Activated CD4-positive, alpha-beta memory T cell treated with anti-CD3 and anti-CD28 coated beads for 36 hours (primary cell): ENCODE measurements at regions of chr1 and their contacts with region 1.

Region 1: DNA sequence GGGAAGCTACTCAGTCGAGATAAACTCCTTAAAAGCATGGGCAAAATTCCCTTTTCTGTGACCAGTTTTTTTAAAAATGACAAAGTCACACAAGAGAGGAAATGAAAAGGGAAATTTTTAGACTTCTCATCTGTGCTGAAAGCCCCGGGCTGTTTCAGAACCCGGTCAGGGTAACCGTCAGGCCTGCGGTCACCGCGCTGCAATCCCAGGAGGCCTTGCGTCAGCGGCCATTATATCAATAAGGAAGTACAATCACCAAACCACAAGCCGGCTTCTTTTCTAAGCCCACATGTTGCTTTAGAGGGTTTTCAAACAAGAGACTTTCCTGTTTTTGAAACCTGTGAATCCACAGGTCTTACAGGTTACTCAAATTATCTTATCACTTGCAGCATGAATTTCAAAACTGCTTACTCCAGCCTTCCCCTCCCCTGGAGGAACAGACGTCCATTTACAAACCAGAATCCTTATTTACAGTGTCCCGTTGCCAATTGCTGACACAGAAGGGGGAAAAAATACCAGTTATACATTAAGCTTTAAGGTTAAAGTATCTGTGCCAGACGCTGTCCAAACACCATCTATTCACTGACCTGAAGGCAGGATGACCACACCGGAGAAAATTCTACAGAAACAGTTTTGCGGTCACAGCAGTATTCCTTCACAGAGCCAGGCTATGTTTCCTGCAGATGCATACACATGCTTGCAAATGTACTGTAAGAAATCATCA is 165.3 kb downstream of the TOMM20 start:
- DNase-seq: peak; percentile 97
- H3K4me3 Mint-ChIP-seq: peak overlapping the region; percentile 63
- H3K27ac Mint-ChIP-seq: peak overlapping the region; percentile 98
- H3K4me1 Mint-ChIP-seq: peaks cover 67% of the 10 kb centered on the region
- H3K27me3 Mint-ChIP-seq: no peaks in the 10 kb centered on the region

Region 2: GRCh38 chr1:234722904-234723720 is 240.2 kb before region 1 on chr1:
- CTCF ChIA-PET with region 1: no interaction called
- POLR2A ChIA-PET with region 1: interaction called, 5 read pairs
- intact Hi-C with region 1: loop called (anchors 1 kb)
- DNase-seq: peak; percentile 91
- H3K4me3 Mint-ChIP-seq: peak overlapping the region; percentile 60
- H3K27ac Mint-ChIP-seq: peak overlapping the region; percentile 96
- H3K4me1 Mint-ChIP-seq: peaks cover 66% of the 10 kb centered on the region
- H3K27me3 Mint-ChIP-seq: no peaks in the 10 kb centered on the region

Region 3: GRCh38 chr1:234772345-234773147 is 190.8 kb before region 1 on chr1:
- CTCF ChIA-PET with region 1: interaction called, 3 read pairs
- POLR2A ChIA-PET with region 1: no interaction called
- intact Hi-C with region 1: loop called (anchors 2 kb)
- DNase-seq: peak; percentile 95
- H3K4me3 Mint-ChIP-seq: peak overlapping the region; percentile 49
- H3K27ac Mint-ChIP-seq: peak overlapping the region; percentile 84
- H3K4me1 Mint-ChIP-seq: peaks cover 54% of the 10 kb centered on the region
- H3K27me3 Mint-ChIP-seq: no peaks in the 10 kb centered on the region

Region 4: DNA sequence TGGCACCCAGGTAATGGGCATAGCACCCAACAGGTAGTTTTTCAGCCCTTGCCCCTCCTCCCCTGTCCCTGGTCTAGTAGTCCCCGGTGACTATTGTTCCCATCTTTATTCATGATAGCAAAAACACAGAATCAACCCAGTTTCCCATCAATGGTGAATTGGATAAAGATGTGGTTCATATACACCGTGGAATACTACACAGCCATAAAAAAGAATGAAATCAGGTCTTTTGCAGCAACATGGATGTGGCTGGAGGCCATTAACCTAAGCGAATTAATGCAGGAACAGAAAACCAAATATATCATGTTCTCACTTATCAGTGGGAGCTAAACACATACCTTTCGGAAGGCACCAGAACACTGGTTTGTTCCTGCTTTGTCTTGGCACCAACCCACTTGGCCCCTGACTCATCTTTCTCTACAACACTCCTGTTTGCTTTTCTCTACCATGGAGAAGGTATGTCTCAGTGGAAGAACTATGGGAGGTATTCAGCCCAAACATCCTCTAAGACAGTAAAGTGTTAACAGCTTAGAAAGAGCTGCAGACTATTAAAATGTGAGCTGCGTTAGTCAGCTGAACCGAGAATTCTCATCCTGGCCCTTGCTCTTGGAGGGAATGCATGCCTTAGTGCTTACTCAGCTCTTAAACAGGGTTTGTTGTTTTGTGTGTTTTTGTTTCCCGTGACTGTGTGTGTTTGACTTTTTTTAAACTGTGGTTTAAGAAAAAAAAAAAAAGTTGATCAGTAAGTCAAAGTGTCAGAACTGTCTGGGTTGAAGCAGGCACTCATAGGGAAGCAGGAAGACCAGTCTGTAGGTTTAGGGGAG is 37.7 kb before region 1 on chr1:
- CTCF ChIA-PET with region 1: interaction called, 6 read pairs
- POLR2A ChIA-PET with region 1: interaction called, 9 read pairs
- intact Hi-C with region 1: loop called (anchors 1 kb)
- DNase-seq: peak; percentile 46
- H3K4me3 Mint-ChIP-seq: peak overlapping the region; percentile 66
- H3K27ac Mint-ChIP-seq: peak overlapping the region; percentile 98
- H3K4me1 Mint-ChIP-seq: peaks cover 54% of the 10 kb centered on the region
- H3K27me3 Mint-ChIP-seq: no peaks in the 10 kb centered on the region

Region 5: GRCh38 chr1:234978397-234979295 is 15.3 kb after region 1 on chr1:
- CTCF ChIA-PET with region 1: interaction called, 7 read pairs
- POLR2A ChIA-PET with region 1: interaction called, 36 read pairs
- intact Hi-C with region 1: loop called (anchors 1 kb)
- DNase-seq: peak; percentile 86
- H3K4me3 Mint-ChIP-seq: peak overlapping the region; percentile 90
- H3K27ac Mint-ChIP-seq: peak overlapping the region; percentile 97
- H3K4me1 Mint-ChIP-seq: peaks cover 80% of the 10 kb centered on the region
- H3K27me3 Mint-ChIP-seq: no peaks in the 10 kb centered on the region

Region 6: DNA sequence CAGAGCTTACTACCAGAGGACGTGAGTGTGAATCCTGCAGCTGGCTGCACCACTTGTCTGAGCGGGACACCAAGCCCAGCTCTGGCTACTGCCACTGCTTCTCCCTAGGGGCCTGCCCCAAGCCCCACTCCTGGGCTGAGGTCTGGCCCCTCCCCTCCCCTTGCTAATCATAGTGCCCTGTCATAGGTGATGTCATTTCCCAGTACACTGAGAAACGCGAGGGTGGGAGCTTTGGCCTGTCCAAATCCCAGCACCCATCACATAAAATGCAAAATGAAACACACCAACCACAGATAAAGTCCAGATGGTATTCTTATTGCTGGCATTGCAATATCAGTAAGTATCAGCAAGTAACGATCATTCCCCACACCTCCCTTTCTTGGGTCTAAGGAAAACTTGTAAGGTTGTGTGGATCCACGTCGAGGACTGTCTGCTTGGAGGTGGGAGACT is 87.6 kb after region 1 on chr1:
- CTCF ChIA-PET with region 1: no interaction called
- POLR2A ChIA-PET with region 1: interaction called, 3 read pairs
- intact Hi-C with region 1: loop called (anchors 1 kb)
- DNase-seq: peak; percentile 76
- H3K4me3 Mint-ChIP-seq: no peak overlapping the region
- H3K27ac Mint-ChIP-seq: peak overlapping the region; percentile 74
- H3K4me1 Mint-ChIP-seq: peaks cover 51% of the 10 kb centered on the region
- H3K27me3 Mint-ChIP-seq: no peaks in the 10 kb centered on the region